ENCODE measurements at regions of chr1 and their contacts with region 1.

Region 1: DNA sequence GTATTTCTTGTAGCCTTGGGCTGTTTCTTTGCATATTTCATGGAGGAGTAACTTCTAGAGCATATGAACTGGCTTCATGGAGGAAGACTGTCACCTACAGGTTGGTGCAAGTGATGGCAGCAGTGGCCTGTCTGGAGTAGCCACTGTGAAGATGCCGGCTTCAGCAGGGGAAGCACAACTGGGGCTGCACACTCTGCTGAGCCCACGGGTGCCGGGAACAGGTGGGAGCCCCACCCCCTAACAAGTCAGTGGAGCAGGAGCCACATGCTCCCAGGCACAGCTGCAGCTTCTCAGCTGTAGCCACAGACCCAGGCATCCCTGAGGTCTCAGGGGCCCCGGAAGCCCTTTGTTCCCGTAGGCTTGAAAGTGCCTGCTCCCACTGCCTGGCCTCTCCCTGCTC is 43.2 kb upstream of the C1orf185 start:
- DNase-seq: no peak

Region 2: DNA sequence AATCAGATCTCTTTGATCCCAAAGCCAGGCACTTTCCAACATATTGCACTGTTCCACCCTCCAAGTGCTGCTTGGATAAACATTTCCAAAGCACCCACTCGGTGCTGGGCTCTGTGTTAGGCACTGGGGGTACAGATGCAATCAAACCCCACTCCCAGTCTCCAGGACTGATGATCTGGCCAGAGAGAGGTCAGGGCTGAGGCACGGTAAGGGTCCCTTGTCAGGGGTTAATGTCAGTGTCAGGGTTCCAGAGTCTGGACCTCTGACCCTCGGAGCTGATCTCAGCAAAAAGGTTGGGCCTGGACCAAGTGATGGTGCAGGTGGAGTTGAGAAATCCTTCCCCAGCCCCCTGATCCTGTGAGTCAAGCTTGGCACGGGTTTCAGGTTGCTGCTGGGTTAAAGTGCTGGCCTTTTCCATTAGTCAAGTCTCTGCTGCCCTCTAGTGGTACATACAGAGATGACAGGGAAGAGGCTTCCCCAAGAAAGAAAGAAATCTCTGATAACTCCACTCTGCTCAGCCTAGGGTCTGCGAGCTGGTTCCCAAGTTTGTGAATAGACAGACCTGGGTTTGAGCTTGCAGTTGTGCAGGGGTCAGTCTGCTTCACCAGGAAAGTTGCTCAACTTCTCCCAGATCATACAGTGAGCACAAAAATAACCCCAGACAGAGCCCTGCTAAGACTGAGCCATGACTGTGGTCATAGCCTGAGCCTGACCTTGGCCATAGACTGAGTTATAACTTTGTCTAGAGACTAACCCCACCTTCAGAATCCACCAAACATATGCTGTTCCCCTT is 710.2 kb before region 1 on chr1:
- intact Hi-C with region 1: loop called in 1 of 2 experiments (anchors 10 kb)
- DNase-seq: no peak

Region 3: DNA sequence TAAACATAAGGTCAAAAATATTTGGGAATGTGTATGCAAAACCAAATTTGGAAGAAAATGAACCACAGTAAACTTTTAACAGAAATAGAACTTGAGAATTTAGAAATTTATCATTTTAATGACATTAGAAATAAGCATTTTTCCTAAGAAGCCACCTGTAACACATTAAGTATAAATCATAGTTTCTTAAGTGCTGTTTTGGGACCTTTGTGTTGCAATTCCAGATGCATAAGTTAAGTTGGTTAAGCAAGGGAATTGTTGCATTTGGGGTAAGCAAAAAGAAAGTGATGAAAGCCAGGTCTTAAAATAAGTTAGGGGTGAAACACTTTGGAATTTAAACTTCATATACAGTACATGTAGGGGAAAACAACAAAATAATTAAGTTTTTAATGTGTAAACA is 39.0 kb before region 1 on chr1:
- intact Hi-C with region 1: no loop called
- DNase-seq: no peak

Measured in posterior vena cava (tissue), 2 donors.